Heart right ventricle (tissue), 16 donors: ENCODE measurements at regions of chr4 and their contacts with region 1.

Region 1: DNA sequence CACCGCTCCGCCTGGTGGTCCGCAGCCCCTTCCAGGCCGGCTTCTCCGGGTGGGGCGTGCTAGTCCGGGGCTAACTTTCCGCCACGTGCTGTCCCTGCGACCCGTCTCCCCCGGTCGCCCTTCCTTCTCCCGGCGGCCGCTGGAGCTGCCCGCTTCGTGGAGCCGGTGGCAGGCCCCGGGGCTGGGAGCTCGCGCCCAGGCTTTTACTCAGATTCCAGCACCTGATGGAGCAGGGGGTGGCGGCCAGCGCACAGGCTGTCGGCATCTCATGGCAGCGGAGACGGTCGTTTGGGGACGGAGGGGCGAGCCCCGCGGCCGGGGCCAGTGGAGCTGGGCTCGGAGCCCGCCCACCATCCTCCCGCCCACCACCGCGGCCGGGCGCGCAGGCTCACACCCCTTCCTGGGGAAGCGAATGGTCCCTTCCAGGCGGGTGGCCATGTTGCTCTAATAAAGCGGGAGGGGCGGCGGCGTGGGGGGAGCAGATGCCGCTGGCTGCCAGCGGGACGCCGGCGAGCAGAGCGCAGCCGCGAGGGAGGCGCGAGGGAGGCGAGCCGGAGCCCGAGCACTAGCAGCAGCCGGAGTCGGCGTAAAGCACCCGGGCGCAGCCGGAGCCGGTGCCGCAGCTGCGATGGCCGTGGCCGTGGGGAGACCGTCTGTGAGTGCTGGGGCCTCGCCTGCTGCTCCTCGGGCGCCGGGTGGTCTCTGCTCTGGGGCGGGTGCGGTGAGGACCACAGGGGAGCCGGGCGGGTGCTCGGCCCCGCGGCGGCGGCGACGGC is at the start of gene SEPTIN11:
- DNase-seq: peak; percentile 93 to 95
- ATAC-seq: peak; percentile 92 to 97 (median 93)
- H3K4me3 ChIP-seq: peak within 1 kb of the TSS; percentile 76 to 94 (median 84)
- H3K27ac ChIP-seq: peak within 1 kb of the TSS; percentile 89 to 98 (median 92)
- H3K4me1 ChIP-seq: peaks cover 0 to 47% (median 29%) of the 10 kb centered on the region in 9 donors
- H3K27me3 ChIP-seq: no peaks in the 10 kb centered on the region
- CTCF ChIP-seq: peak in 1 of 9 donors; percentile 3
- total RNA-seq, gene SEPTIN11: 26.3 to 55.2 (median 30.6) TPM

Region 2: DNA sequence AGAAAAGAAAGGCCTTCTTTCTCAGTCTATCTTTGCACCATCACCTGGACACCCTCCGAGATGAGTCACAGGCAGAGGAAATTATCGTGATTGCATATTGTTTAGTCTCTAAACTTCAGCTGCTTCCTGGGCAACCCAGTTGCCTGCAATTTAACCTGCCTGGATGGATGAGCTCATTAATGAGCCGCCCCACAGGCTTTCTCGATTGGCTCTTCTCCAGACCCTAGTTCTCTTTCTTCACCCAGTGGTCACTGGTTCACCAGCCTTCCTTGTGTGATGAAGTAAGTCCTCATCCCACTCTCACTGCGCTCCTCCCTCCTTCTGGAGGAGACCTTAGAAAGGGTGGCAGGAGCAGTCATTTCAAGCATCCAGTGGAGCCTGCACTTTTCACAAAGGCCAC is 145.9 kb before region 1 on chr4:
- intact Hi-C with region 1: loop called in 1 of 10 experiments (anchors 5 kb)
- DNase-seq: no peak
- ATAC-seq: peak in 4 of 8 donors; percentile 19 to 57 (median 36)
- H3K4me3 ChIP-seq: no peak overlapping the region
- H3K27ac ChIP-seq: peak overlapping the region in 6 of 10 donors; percentile 12 to 88 (median 66)
- H3K4me1 ChIP-seq: peaks cover 0 to 38% (median 13%) of the 10 kb centered on the region in 9 donors
- H3K27me3 ChIP-seq: peaks cover 0 to 11% (median 6%) of the 10 kb centered on the region in 7 donors
- CTCF ChIP-seq: no peak

Region 3: DNA sequence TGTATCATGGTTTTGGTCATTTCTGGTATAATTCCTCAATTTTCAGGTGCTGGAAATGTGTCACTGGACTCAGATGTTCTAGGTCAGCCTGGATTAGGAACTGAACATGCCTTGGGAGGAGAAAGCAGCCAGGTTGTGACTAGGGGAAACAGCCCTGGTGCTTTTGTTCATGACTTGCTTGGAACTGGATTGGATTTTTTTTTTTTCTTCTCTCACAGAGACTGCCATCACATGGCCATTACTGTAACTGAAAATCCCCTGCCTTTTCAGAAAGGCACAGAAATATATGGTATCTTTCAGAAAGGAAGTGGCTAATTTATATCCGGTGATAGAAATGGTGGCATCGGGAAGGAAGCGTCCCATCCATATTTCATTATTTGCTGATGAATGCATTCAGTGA is 34.7 kb after region 1 on chr4:
- intact Hi-C with region 1: loop called in 2 of 10 experiments (anchors 2 to 5 kb)
- DNase-seq: no peak
- ATAC-seq: peak in 3 of 8 donors; percentile 17 to 53 (median 36)
- H3K4me3 ChIP-seq: no peak overlapping the region
- H3K27ac ChIP-seq: peak overlapping the region; percentile 18 to 73 (median 50)
- H3K4me1 ChIP-seq: peaks cover 3 to 93% (median 64%) of the 10 kb centered on the region in 9 donors
- H3K27me3 ChIP-seq: no peaks in the 10 kb centered on the region
- CTCF ChIP-seq: peak in 6 of 9 donors; percentile 12 to 51 (median 38)

Region 4: GRCh38 chr4:77015390-77015789 is 65.9 kb after region 1 on chr4:
- intact Hi-C with region 1: loop called in 1 of 10 experiments (anchors 10 kb)
- DNase-seq: no peak
- ATAC-seq: no peak
- H3K4me3 ChIP-seq: no peak overlapping the region
- H3K27ac ChIP-seq: no peak overlapping the region
- H3K4me1 ChIP-seq: peaks cover 0 to 42% (median 23%) of the 10 kb centered on the region in 9 donors
- H3K27me3 ChIP-seq: no peaks in the 10 kb centered on the region
- CTCF ChIP-seq: no peak

Region 5: DNA sequence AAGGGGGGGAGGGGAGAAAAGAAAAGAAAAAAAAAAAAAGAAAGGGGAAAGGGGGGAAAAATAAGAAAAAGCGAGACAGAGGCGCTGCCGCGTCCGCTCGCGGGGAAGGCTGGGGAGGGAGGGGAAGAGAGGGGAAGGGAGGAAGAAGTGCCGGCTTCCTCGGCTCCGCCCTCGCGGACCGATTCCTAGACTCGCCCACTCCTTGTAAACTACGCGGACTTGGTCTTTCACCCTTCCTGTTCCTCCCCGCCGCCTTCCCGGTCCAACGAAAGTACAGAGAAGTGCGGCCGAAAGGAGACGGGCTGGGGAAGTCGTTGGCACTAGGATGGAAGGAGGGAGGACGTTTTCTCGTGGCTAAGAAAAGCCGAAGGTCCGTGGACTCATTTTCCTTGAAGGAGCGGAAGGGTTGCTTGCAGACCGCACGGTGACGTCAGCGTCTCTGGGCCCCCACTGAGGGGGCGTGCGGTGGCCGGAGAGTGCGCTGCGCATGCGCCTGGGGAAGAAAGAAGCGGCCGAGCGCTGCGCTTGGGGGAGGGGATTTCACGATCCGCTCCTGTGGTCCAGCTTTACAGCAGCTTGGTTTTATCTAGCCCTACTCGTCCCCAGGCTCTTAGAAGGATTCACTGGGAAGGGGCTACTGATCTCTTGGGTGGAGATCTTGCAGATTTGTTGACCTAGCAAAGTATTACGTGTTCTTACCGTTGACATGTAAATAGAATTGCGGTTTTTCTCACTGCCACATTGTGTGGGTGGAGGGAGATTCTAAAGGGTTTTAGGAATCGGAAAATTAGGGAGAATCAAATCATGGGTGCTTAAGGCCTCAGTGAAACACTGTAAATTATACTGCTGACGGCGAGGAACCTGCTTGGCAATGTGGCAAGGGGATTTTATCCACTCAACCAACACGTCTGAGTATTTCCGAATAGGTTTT is 126.7 kb after region 1 on chr4 and contains the start of gene CCNI:
- intact Hi-C with region 1: loop called in 2 of 10 experiments (anchors 5 to 10 kb)
- DNase-seq: peak; percentile 96
- ATAC-seq: peak; percentile 94 to 98 (median 95)
- H3K4me3 ChIP-seq: peak within 1 kb of the TSS; percentile 66 to 92 (median 80)
- H3K27ac ChIP-seq: peak within 1 kb of the TSS; percentile 91 to 100 (median 99)
- H3K4me1 ChIP-seq: peaks cover 0 to 62% (median 35%) of the 10 kb centered on the region in 9 donors
- H3K27me3 ChIP-seq: no peaks in the 10 kb centered on the region
- CTCF ChIP-seq: no peak
- total RNA-seq, gene CCNI: 223 to 354 (median 306) TPM

Region 6: DNA sequence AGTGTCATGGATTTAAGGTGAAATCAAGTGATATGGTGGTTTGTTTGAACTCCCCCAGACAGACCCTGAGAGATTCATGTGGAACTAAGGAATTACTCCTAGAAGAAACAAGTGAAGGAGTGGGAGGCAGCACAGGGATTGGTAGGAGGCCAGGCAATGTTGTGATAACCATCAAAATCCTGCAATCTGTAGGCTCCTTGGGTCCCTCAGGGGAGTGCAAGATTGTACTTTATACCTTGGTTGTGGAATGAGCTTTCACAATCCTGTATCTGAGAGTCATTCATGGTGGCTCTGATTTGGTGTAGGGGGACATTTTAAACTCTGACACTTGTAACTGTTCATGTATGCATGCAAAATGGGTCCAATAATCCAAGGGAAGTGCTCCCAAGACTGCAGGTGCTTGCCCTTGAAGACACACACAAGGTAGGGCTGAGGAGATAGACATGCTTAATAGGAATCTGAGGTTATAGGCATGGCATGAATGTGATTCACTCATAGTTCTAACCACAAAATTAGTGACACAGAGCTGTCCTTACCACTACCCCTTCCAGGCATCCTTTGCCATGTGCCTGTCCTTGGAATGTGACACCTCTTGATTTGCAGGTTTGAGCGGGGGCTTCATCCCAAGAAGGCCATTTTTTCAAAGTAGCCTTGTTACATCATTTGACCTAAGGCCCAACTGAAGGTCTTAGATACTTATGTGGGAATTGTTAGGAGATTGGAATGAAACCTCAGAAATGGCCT is 319.9 kb after region 1 on chr4:
- intact Hi-C with region 1: no loop called
- DNase-seq: no peak
- ATAC-seq: no peak
- H3K4me3 ChIP-seq: no peak overlapping the region
- H3K27ac ChIP-seq: no peak overlapping the region
- H3K4me1 ChIP-seq: no peaks in the 10 kb centered on the region
- H3K27me3 ChIP-seq: no peaks in the 10 kb centered on the region
- CTCF ChIP-seq: no peak